Calu3 (cell line): ENCODE measurements at regions of chr22 and their contacts with region 1.

Region 1: DNA sequence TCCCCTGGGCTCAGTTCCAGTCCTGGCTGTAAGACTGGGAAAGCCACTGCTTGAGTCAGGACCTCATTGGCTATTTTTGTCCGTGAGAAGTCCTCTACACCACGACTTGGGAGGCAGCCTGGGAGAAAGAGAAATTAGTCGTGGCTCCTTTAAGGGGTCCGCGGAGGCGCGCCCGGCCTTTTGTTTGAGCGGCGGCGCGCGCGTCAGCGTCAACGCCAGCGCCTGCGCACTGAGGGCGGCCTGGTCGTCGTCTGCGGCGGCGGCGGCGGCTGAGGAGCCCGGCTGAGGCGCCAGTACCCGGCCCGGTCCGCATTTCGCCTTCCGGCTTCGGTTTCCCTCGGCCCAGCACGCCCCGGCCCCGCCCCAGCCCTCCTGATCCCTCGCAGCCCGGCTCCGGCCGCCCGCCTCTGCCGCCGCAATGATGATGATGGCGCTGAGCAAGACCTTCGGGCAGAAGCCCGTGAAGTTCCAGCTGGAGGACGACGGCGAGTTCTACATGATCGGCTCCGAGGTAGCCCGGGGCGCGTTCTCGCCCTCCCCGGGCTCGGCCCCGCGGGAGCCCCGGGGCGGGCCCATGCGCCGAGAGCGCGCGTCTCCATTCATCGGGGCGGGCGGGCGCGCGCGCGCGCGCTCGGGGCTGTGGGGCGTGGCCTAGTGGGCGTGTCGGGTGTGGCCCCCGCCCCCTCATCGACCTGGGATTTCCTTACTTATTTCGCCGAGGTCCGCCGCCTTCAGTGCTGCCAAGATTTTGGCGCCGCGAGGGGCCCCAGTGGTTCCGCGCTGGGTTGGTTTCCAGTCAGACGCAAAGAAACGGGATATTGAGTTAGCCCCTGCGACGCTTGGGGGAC is at the start of gene SMARCB1:
- DNase-seq: peak; percentile 93
- H3K4me3 Mint-ChIP-seq: peak within 1 kb of the TSS; percentile 79
- H3K27ac Mint-ChIP-seq: peak within 1 kb of the TSS; percentile 73
- H3K4me1 Mint-ChIP-seq: peaks cover 11% of the 10 kb centered on the region
- H3K27me3 Mint-ChIP-seq: no peaks in the 10 kb centered on the region
- CTCF ChIP-seq: no peak
- total RNA-seq, gene SMARCB1: 88.2 and 88.8 TPM in 2 replicates

Region 2: GRCh38 chr22:23715806-23716375 is 71.1 kb before region 1 on chr22:
- CTCF ChIA-PET with region 1: no interaction called
- intact Hi-C with region 1: no loop called
- DNase-seq: no peak
- H3K4me3 Mint-ChIP-seq: peak overlapping the region; percentile 79
- H3K27ac Mint-ChIP-seq: no peak overlapping the region
- H3K4me1 Mint-ChIP-seq: peaks cover 12% of the 10 kb centered on the region
- H3K27me3 Mint-ChIP-seq: no peaks in the 10 kb centered on the region
- CTCF ChIP-seq: no peak

Region 3: DNA sequence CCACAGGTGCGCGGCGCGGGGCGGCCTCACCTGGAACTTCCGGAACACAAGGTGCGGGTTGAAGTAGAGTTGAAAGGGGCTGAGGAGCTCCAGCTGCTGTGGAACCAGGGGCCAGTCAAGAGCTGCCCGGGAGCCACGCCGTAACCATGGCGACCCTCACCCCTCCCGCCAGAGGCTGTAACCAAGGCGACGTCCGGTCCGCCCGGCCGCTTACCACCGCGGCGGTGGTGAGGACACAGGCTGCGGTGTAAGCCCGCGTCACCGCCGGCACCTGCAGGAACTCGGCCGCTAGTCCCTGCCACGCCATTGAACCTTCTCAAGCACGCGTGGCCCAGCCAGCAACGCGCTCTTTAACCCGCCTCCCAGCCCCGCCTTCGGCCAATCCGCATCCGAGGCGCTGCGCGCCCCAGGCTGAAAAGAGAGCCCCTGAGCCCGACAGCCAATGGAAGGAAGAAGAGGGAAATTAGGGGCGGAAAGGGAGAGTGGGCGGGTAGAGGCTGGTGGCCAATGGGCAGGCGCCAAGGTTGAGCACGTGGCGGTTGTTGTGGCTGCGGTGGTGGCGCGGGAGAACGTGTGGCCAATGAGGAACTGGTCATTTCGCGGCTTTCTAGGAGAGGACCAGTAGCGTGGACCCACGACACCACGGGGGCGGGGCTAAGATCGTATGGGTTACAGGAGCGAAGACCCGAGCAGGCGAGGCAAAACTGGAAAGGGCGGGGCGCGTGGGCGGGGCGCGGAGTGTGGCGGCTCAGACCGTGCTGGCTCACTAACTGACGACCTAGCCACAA is 51.9 kb after region 1 on chr22 and contains the start of gene DERL3:
- CTCF ChIA-PET with region 1: no interaction called
- intact Hi-C with region 1: loop called (anchors 10 kb)
- DNase-seq: peak; percentile 97
- H3K4me3 Mint-ChIP-seq: peak within 1 kb of the TSS; percentile 81
- H3K27ac Mint-ChIP-seq: peak within 1 kb of the TSS; percentile 92
- H3K4me1 Mint-ChIP-seq: peaks cover 23% of the 10 kb centered on the region
- H3K27me3 Mint-ChIP-seq: peaks cover 44% of the 10 kb centered on the region
- CTCF ChIP-seq: no peak
- total RNA-seq, gene DERL3: 2.9 and 3.7 TPM in 2 replicates

Region 4: GRCh38 chr22:24542641-24543040 is 755.7 kb after region 1 on chr22:
- CTCF ChIA-PET with region 1: no interaction called
- intact Hi-C with region 1: no loop called
- DNase-seq: no peak
- H3K4me3 Mint-ChIP-seq: no peak overlapping the region
- H3K27ac Mint-ChIP-seq: no peak overlapping the region
- H3K4me1 Mint-ChIP-seq: peaks cover 10% of the 10 kb centered on the region
- H3K27me3 Mint-ChIP-seq: no peaks in the 10 kb centered on the region
- CTCF ChIP-seq: no peak